ENCODE measurements at regions of chr9 and their contacts with region 1.

Region 1: GRCh38 chr9:89602978-89603766 is 1.6 kb upstream of the GADD45G start:
- DNase-seq: peak; percentile 92
- H3K4me3 Mint-ChIP-seq: peak overlapping the region; percentile 69
- H3K27ac Mint-ChIP-seq: peak overlapping the region; percentile 34
- H3K4me1 Mint-ChIP-seq: peaks cover 39% of the 10 kb centered on the region
- H3K27me3 Mint-ChIP-seq: peaks cover 73% of the 10 kb centered on the region

Region 2: GRCh38 chr9:89358985-89359384 is 244.2 kb before region 1 on chr9:
- CTCF ChIA-PET with region 1: no interaction called
- DNase-seq: no peak
- H3K4me3 Mint-ChIP-seq: no peak overlapping the region
- H3K27ac Mint-ChIP-seq: no peak overlapping the region
- H3K4me1 Mint-ChIP-seq: peaks cover 5% of the 10 kb centered on the region
- H3K27me3 Mint-ChIP-seq: no peaks in the 10 kb centered on the region

Region 3: GRCh38 chr9:89738137-89738932 is 135.2 kb after region 1 on chr9:
- CTCF ChIA-PET with region 1: interaction called, 17 read pairs
- DNase-seq: no peak
- H3K4me3 Mint-ChIP-seq: no peak overlapping the region
- H3K27ac Mint-ChIP-seq: no peak overlapping the region
- H3K4me1 Mint-ChIP-seq: peaks cover 57% of the 10 kb centered on the region
- H3K27me3 Mint-ChIP-seq: peaks cover 24% of the 10 kb centered on the region

Region 4: GRCh38 chr9:89750147-89750861 is 147.1 kb after region 1 on chr9:
- CTCF ChIA-PET with region 1: interaction called, 11 read pairs
- DNase-seq: no peak
- H3K4me3 Mint-ChIP-seq: no peak overlapping the region
- H3K27ac Mint-ChIP-seq: no peak overlapping the region
- H3K4me1 Mint-ChIP-seq: peaks cover 39% of the 10 kb centered on the region
- H3K27me3 Mint-ChIP-seq: peaks cover 25% of the 10 kb centered on the region

Region 5: GRCh38 chr9:89919169-89919681 is 316.1 kb after region 1 on chr9:
- CTCF ChIA-PET with region 1: interaction called, 93 read pairs
- DNase-seq: peak; percentile 64
- H3K4me3 Mint-ChIP-seq: no peak overlapping the region
- H3K27ac Mint-ChIP-seq: peak overlapping the region; percentile 8
- H3K4me1 Mint-ChIP-seq: peaks cover 12% of the 10 kb centered on the region
- H3K27me3 Mint-ChIP-seq: peaks cover 55% of the 10 kb centered on the region

Region 6: GRCh38 chr9:89999534-90000370 is 396.6 kb after region 1 on chr9:
- CTCF ChIA-PET with region 1: interaction called, 33 read pairs
- DNase-seq: peak; percentile 85
- H3K4me3 Mint-ChIP-seq: peak overlapping the region; percentile 70
- H3K27ac Mint-ChIP-seq: peak overlapping the region; percentile 93
- H3K4me1 Mint-ChIP-seq: peaks cover 27% of the 10 kb centered on the region
- H3K27me3 Mint-ChIP-seq: peaks cover 13% of the 10 kb centered on the region

Region 7: GRCh38 chr9:90102292-90102901 is 499.2 kb after region 1 on chr9:
- CTCF ChIA-PET with region 1: interaction called, 171 read pairs
- DNase-seq: peak; percentile 87
- H3K4me3 Mint-ChIP-seq: no peak overlapping the region
- H3K27ac Mint-ChIP-seq: no peak overlapping the region
- H3K4me1 Mint-ChIP-seq: peaks cover 9% of the 10 kb centered on the region
- H3K27me3 Mint-ChIP-seq: peaks cover 14% of the 10 kb centered on the region

Measured in activated naive CD4-positive, alpha-beta T cell treated with anti-CD3 and anti-CD28 coated beads, Interleukin-2, amount 10 ng/mL, durations not matched to agents 7 days and 5 days (primary cell).